ENCODE measurements at regions of chr4 and their contacts with region 1.

Region 1: GRCh38 chr4:147326591-147326990 is 154.3 kb upstream of the EDNRA start:
- DNase-seq: no peak

Region 2: GRCh38 chr4:147361726-147362125 is 35.1 kb after region 1 on chr4:
- intact Hi-C with region 1: loop called (anchors 5 kb)
- DNase-seq: no peak

Measured in cardiac septum (tissue), 1 donor.